ENCODE measurements at regions of chr13 and their contacts with region 1.

Region 1: GRCh38 chr13:48975856-48976575 is at the start of gene FNDC3A:
- DNase-seq: peak; percentile 89
- H3K4me3 Mint-ChIP-seq: peak within 1 kb of the TSS; percentile 96
- H3K27ac Mint-ChIP-seq: peak within 1 kb of the TSS; percentile 98
- H3K4me1 Mint-ChIP-seq: peaks cover 31% of the 10 kb centered on the region
- H3K27me3 Mint-ChIP-seq: peaks cover 4% of the 10 kb centered on the region
- total RNA-seq, gene FNDC3A: 17.1 to 18.3 TPM

Region 2: DNA sequence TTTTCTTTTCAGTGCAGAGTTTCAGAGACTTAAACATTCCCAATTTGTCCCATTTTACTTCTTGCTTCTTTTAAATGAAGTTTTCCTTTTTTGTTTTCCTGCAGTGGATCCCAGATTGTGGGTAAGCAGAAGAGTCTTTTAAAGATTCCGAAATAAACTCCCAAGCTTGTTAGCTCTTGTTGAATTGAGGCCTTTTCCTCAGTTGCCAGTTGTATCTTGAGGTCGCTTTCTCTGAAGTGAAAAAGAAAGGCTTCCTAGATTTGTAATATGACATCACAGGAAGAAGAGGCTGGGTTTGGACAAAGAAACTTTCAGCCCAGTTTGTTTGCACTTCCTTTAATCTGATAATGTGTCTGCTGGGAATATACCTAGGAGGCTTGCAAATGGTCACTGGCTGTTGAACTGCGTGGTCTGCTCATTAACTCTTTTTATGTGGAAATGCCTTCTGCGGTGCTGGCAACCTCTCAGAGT is 563.1 kb before region 1 on chr13 and contains the start of gene LPAR6:
- CTCF ChIA-PET with region 1: no interaction called
- intact Hi-C with region 1: loop called (anchors 2 kb)
- DNase-seq: peak; percentile 20
- H3K4me3 Mint-ChIP-seq: peak within 1 kb of the TSS; percentile 84
- H3K27ac Mint-ChIP-seq: peak within 1 kb of the TSS; percentile 92
- H3K4me1 Mint-ChIP-seq: peaks cover 33% of the 10 kb centered on the region
- H3K27me3 Mint-ChIP-seq: no peaks in the 10 kb centered on the region
- total RNA-seq, gene LPAR6: 6.1 to 6.6 TPM

Region 3: DNA sequence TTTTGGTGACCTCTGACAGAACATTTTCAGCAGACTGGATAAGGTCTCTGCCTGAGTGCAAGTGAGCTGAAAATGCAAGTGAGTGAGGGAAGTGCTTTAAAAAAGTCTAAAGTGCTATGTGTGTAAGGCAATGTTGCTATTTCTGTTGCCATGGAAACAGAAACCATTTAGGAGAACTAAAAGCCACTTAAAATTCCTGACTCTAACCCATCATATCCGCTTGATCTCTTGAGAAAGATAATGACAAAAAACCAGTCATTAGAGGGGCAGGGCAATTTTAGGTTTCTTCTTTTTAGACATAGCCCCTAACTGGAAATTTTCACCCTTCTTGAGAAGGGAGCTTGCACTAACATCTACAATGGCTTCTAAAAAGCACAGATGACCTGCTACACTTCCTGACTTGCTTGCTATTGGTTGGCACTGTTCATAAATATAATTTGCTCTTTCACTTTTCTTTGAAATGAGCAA is 322.5 kb before region 1 on chr13 and contains the start of gene CYSLTR2:
- CTCF ChIA-PET with region 1: no interaction called
- intact Hi-C with region 1: loop called (anchors 1 kb)
- DNase-seq: peak; percentile 27
- H3K4me3 Mint-ChIP-seq: peak within 1 kb of the TSS; percentile 75
- H3K27ac Mint-ChIP-seq: peak within 1 kb of the TSS; percentile 82
- H3K4me1 Mint-ChIP-seq: peaks cover 29% of the 10 kb centered on the region
- H3K27me3 Mint-ChIP-seq: no peaks in the 10 kb centered on the region
- total RNA-seq, gene CYSLTR2: 1.3 to 1.7 TPM

Region 4: GRCh38 chr13:48879432-48879831 is 96.6 kb before region 1 on chr13:
- CTCF ChIA-PET with region 1: no interaction called
- intact Hi-C with region 1: loop called (anchors 1 kb)
- DNase-seq: no peak
- H3K4me3 Mint-ChIP-seq: no peak overlapping the region
- H3K27ac Mint-ChIP-seq: no peak overlapping the region
- H3K4me1 Mint-ChIP-seq: peaks cover 42% of the 10 kb centered on the region
- H3K27me3 Mint-ChIP-seq: no peaks in the 10 kb centered on the region

Region 5: DNA sequence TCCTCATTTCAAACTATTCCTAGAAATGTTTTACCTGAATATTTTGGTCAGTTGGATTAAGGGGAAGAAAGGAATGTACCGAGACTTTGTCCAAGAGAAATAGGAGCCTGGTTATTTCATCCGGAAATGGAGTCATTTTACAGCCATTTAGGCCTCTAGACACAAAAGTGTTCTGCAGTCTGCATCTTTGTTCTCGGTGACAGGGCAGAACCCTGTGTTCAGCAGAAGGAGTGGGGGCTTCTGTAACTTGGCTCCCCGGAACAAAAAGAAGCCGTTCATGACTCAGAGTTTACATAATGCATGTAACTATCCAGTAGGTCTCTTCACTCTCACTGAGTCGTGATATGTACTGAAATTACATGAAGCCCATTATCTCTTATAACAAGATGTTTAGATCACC is 21.9 kb before region 1 on chr13:
- CTCF ChIA-PET with region 1: no interaction called
- intact Hi-C with region 1: no loop called
- DNase-seq: no peak
- H3K4me3 Mint-ChIP-seq: no peak overlapping the region
- H3K27ac Mint-ChIP-seq: no peak overlapping the region
- H3K4me1 Mint-ChIP-seq: no peaks in the 10 kb centered on the region
- H3K27me3 Mint-ChIP-seq: no peaks in the 10 kb centered on the region

Region 6: DNA sequence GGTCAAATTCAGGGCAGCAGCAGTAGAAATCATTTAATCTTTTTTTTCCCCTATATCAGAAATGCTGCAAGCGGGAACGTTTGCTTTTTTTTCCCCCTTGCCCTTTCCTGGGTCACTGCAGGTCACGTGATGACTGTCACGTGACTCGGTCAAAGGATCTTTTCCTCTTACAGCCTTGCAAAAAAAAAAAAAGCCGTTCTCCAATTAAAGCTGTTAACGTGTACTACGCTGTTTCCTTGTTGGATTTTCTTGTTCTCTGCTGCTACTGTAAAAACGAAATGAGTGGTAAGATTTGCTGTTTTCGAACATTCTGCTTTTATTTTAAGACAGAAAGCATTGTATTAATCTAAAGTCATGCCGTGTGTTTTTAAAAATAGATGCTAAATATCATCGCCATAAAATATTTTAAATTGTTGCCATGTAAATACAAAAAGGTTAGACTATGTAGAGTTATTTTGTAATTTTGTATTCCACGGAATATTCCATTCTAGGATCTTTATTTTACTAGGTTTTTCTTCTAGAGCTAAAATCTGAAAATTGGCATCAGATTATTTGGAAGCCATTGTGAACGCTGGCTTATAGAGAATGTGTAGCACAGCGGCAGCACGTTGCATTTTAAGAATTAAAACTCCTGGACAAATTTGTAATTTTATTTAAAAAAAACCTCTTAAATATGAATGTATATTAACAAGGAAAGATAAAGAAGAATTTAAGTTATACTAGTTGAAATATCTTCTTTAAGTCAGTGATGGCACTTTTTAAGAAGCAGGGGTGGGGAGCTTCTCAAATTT is 134.3 kb after region 1 on chr13:
- CTCF ChIA-PET with region 1: no interaction called
- intact Hi-C with region 1: loop called (anchors 1 kb)
- DNase-seq: peak; percentile 87
- H3K4me3 Mint-ChIP-seq: peak overlapping the region; percentile 75
- H3K27ac Mint-ChIP-seq: peak overlapping the region; percentile 84
- H3K4me1 Mint-ChIP-seq: peaks cover 25% of the 10 kb centered on the region
- H3K27me3 Mint-ChIP-seq: no peaks in the 10 kb centered on the region

Region 7: GRCh38 chr13:49585220-49586157 is 609.5 kb after region 1 on chr13 and contains the start of gene RCBTB1:
- CTCF ChIA-PET with region 1: no interaction called
- intact Hi-C with region 1: loop called (anchors 5 kb)
- DNase-seq: peak; percentile 56
- H3K4me3 Mint-ChIP-seq: peak within 1 kb of the TSS; percentile 88
- H3K27ac Mint-ChIP-seq: peak within 1 kb of the TSS; percentile 61
- H3K4me1 Mint-ChIP-seq: peaks cover 25% of the 10 kb centered on the region
- H3K27me3 Mint-ChIP-seq: no peaks in the 10 kb centered on the region
- total RNA-seq, gene RCBTB1: 17.8 to 19.2 TPM

Measured in activated naive CD4-positive, alpha-beta T cell treated with anti-CD3 and anti-CD28 coated beads for 36 hours (primary cell).